A549 (cell line): ENCODE measurements at regions of chr12 and their contacts with region 1.

Region 1: GRCh38 chr12:78470354-78471195 is 394.0 kb upstream of the SYT1 start:
- DNase-seq: peak; percentile 6 to 64
- ATAC-seq: peak; percentile 85 to 95; a peak in 5 of 6 replicates
- H3K4me3 ChIP-seq: no peak overlapping the region
- H3K27ac ChIP-seq: no peak overlapping the region
- H3K4me1 ChIP-seq: no peaks in the 10 kb centered on the region
- CTCF ChIP-seq: peak; percentile 67
- EP300 ChIP-seq: no peak
- POLR2A ChIP-seq: no peak
- RAD21 ChIP-seq: peak; percentile 71 to 72

Region 2: GRCh38 chr12:78194448-78194847 is 276.1 kb before region 1 on chr12:
- CTCF ChIA-PET with region 1: no interaction called
- POLR2A ChIA-PET with region 1: no interaction called
- DNase-seq: no peak
- ATAC-seq: no peak
- H3K4me3 ChIP-seq: no peak overlapping the region
- H3K27ac ChIP-seq: no peak overlapping the region
- H3K4me1 ChIP-seq: 0 out of 3 replicates have a peak, but pooled peaks cover 3% of the 10 kb centered on the region
- CTCF ChIP-seq: no peak
- EP300 ChIP-seq: no peak
- POLR2A ChIP-seq: no peak
- RAD21 ChIP-seq: no peak

Region 3: DNA sequence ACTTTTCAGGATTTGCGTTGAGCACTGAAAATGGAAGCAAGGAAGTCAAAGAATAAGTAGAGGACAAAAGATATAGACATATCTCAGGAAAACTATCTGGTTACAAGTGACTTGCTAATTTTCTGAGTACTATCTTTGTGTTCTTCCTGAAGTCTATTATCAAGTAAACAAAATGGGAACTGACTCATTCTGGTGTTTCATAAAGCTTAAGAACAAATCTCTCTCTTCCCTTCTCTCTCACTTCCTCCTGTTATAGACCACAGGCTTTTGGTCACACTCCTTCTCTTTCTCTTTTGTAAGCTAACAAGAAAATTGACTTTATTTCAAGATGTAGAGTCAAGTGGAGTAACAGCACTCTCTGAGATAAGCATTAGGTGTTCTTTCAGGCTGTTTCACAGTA is 12.6 kb before region 1 on chr12:
- CTCF ChIA-PET with region 1: interaction called, 11 read pairs
- POLR2A ChIA-PET with region 1: no interaction called
- DNase-seq: no peak
- ATAC-seq: no peak
- H3K4me3 ChIP-seq: no peak overlapping the region
- H3K27ac ChIP-seq: no peak overlapping the region
- H3K4me1 ChIP-seq: no peaks in the 10 kb centered on the region
- CTCF ChIP-seq: no peak
- EP300 ChIP-seq: no peak
- POLR2A ChIP-seq: no peak
- RAD21 ChIP-seq: no peak

Region 4: GRCh38 chr12:78483767-78484315 is 13.3 kb after region 1 on chr12:
- CTCF ChIA-PET with region 1: interaction called, 23 read pairs
- POLR2A ChIA-PET with region 1: no interaction called
- DNase-seq: no peak
- ATAC-seq: no peak
- H3K4me3 ChIP-seq: no peak overlapping the region
- H3K27ac ChIP-seq: no peak overlapping the region
- H3K4me1 ChIP-seq: no peaks in the 10 kb centered on the region
- CTCF ChIP-seq: no peak
- EP300 ChIP-seq: no peak
- POLR2A ChIP-seq: no peak
- RAD21 ChIP-seq: no peak

Region 5: GRCh38 chr12:78530100-78530765 is 59.7 kb after region 1 on chr12:
- CTCF ChIA-PET with region 1: no interaction called
- POLR2A ChIA-PET with region 1: no interaction called
- DNase-seq: peak in 1 of 2 experiments; percentile 20
- ATAC-seq: peak; percentile 19 to 44; a peak in 2 of 6 replicates
- H3K4me3 ChIP-seq: no peak overlapping the region
- H3K27ac ChIP-seq: no peak overlapping the region
- H3K4me1 ChIP-seq: peaks cover 11% of the 10 kb centered on the region; the same call in 1 of the 3 replicates
- CTCF ChIP-seq: no peak
- EP300 ChIP-seq: no peak
- POLR2A ChIP-seq: no peak
- RAD21 ChIP-seq: no peak

Region 6: DNA sequence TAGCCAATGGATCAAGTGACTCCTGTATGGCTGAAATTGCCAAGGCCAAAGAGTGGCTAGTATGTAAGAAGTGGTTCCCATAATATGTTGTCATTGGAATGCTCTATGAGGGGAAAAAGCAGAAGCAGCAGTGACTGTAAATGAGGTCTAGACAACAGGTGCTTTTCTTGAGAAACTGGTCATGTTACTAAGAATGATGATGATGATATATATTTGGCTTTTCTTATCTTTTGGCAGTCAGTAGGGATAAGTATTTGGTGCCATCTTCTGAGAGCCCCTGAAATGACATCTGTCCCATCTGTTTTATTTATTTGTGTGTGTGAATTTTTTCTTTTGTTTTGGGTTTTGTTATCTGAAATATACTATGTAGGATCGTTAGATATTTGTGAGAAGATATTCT is 535.7 kb after region 1 on chr12:
- CTCF ChIA-PET with region 1: interaction called, 17 read pairs
- POLR2A ChIA-PET with region 1: no interaction called
- DNase-seq: peak in 1 of 2 experiments; percentile 39
- ATAC-seq: peak in 1 of 2 experiments; percentile 36; a peak in 1 of 6 replicates
- H3K4me3 ChIP-seq: no peak overlapping the region
- H3K27ac ChIP-seq: no peak overlapping the region
- H3K4me1 ChIP-seq: no peaks in the 10 kb centered on the region
- CTCF ChIP-seq: peak; percentile 62
- EP300 ChIP-seq: no peak
- POLR2A ChIP-seq: no peak
- RAD21 ChIP-seq: peak; percentile 77 to 79

Region 7: DNA sequence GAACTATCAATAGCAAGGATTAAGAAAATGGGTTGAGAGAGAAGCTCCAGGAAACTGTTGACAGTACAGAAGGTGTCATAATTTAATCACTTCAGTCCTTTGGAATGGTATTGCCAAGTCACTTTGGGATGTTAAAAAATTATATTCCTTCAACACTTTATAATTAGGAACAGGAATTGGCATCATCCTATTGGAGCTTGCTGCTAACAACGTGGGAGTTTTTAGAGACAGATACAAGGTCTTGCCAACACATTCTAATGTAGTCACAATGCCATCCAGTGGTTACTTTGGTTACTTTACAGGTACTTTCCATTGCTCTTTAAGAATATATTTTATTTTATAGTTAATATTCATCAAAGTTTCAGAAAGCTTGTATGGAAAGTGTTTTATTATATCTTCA is 704.1 kb after region 1 on chr12:
- CTCF ChIA-PET with region 1: interaction called, 12 read pairs
- POLR2A ChIA-PET with region 1: no interaction called
- DNase-seq: peak; percentile 6 to 78
- ATAC-seq: peak; percentile 47 to 82; a peak in 3 of 6 replicates
- H3K4me3 ChIP-seq: no peak overlapping the region
- H3K27ac ChIP-seq: no peak overlapping the region
- H3K4me1 ChIP-seq: no peaks in the 10 kb centered on the region
- CTCF ChIP-seq: peak; percentile 54
- EP300 ChIP-seq: no peak
- POLR2A ChIP-seq: no peak
- RAD21 ChIP-seq: peak; percentile 71 to 73